ENCODE measurements at regions of chr6 and their contacts with region 1.

Region 1: DNA sequence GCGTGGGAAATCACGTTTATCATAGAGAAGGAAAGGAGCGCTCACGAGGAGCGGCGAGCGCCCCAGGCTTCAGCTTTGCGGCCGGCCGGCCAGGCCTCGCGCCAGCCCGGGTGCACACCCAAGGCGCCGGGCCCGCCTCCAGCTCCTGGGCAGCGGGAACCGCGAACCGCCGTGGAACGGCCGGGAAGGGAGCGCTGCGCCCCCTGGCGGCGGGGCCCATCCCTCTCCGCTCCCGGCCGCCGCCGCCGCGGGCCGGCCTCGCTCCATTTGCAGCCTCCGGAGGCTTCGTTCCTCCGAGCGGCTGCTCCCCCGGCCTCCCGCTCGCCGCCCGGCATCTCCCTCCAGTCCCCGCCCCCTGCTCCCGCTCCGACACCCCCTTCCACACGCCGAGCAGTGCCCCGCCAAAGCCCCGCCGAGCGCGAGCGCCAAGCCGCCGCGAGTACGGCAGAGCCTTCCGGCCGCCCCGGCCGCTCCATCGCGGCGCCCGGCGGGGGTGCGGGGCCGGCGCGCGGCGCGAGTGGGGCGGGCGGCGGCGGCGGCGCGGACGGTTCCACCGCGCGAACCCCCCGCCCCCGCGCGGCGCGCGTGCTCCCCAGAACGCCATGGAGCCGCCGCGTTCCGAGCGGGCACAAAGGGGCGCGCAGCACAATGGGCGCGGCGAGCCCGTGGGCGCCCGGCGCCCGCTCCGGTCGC is 956 bp downstream of the BEND3 start:
- DNase-seq: peak; percentile 61 to 87
- H3K4me3 ChIP-seq: peak overlapping the region; percentile 58
- H3K27ac ChIP-seq: no peak overlapping the region
- H3K4me1 ChIP-seq: peaks cover 8% of the 10 kb centered on the region; the same call in 1 of the 2 replicates
- H3K27me3 ChIP-seq: no peaks in the 10 kb centered on the region
- CTCF ChIP-seq: peak; percentile 65

Region 2: DNA sequence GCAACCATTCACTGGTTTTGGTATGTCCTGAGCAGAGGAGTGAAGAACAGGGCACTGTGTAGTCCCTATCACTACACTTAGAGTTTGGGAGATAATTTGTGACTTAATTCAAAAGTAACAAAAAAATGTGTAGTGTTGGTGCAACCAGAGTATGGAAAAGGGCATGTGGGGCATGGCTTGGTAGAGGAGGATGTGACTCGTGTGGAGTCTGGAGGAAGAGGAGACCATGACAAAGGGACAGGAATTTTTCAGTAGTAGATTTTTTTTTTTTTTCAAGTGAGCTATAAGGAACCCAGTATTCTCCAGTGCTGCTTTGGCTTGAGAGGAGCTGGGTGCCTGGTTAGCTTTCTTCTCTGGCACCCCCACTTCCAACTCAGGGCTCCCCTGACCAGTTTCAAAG is 81.2 kb before region 1 on chr6:
- CTCF ChIA-PET with region 1: no interaction called
- POLR2A ChIA-PET with region 1: interaction called, 5 read pairs
- intact Hi-C with region 1: loop called (anchors 1 kb)
- DNase-seq: no peak
- H3K4me3 ChIP-seq: no peak overlapping the region
- H3K27ac ChIP-seq: no peak overlapping the region
- H3K4me1 ChIP-seq: peaks cover 17% of the 10 kb centered on the region; the same call in 1 of the 2 replicates
- H3K27me3 ChIP-seq: no peaks in the 10 kb centered on the region
- CTCF ChIP-seq: no peak

Region 3: GRCh38 chr6:107304421-107305025 is 190.2 kb after region 1 on chr6:
- CTCF ChIA-PET with region 1: no interaction called
- POLR2A ChIA-PET with region 1: no interaction called
- intact Hi-C with region 1: no loop called
- DNase-seq: peak; percentile 63 to 92
- H3K4me3 ChIP-seq: no peak overlapping the region
- H3K27ac ChIP-seq: peak overlapping the region; percentile 55
- H3K4me1 ChIP-seq: peaks cover 19% of the 10 kb centered on the region
- H3K27me3 ChIP-seq: no peaks in the 10 kb centered on the region
- CTCF ChIP-seq: no peak

Region 4: GRCh38 chr6:107600936-107601335 is 486.6 kb after region 1 on chr6:
- CTCF ChIA-PET with region 1: no interaction called
- POLR2A ChIA-PET with region 1: no interaction called
- intact Hi-C with region 1: no loop called
- DNase-seq: peak; percentile 62 to 67
- H3K4me3 ChIP-seq: no peak overlapping the region
- H3K27ac ChIP-seq: no peak overlapping the region
- H3K4me1 ChIP-seq: peaks cover 15% of the 10 kb centered on the region
- H3K27me3 ChIP-seq: no peaks in the 10 kb centered on the region
- CTCF ChIP-seq: no peak